ENCODE measurements at regions of chr7 and their contacts with region 1.

Region 1: DNA sequence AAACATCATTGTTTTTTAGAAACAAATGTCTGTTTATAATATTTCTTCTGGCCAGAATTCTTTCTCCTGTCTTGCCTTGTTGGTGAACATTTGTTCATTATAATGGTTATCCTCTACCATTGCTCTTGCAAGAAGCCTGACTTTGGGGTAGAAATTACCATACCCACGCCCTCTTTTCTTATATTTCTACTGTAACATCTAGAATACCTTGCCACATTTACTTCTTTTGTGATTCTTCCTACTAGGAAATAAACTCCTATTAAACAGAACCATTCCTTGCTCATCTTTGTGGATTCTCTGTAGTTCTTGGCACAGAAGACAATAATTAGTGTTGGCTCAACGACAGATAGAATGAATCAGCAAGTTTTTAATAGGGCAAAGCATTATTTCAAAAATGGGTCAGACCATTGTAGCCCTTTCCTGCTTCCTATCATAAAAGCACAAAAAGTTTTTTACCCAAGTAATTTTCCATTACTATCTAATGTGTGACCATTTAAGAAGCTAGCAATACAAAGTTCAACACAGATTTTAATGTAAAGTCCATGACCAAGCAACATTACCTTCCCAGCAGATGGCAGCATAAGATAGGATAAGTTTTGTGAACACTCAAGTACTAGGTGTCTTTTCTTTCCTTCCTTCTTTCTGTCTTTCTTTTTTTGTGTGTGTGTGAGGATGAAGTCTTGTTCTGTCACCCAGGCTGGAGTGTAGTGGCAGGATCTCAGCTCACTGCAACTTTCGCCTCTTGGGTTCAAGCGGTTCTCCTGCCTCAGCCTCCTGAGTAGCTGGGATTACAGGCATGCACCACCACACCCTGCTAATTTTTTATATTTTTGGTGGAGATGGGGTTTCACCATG is 270.4 kb downstream of the HGF start:
- DNase-seq: peak; percentile 75
- H3K4me3 ChIP-seq: no peak overlapping the region
- CTCF ChIP-seq: peak; percentile 43

Region 2: DNA sequence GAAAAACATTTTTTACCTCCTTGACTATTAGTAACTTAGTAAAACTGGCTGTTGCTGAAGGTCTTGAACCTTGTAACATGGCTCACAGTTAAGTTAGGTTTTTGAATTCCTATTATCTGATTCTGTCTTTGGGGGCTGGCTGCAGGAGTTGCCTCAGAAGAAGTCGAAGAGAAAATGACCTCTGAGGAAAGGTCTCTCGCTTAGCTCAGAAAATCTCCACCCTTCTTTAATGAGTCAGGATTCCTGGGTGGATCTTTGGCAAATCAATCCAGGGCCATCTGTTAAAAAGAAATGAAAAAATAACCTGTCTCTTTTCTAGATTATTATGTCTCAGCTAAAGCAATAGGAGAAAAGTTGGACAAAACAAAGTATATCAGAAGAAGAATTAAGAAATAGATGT is 312.8 kb before region 1 on chr7:
- in situ Hi-C with region 1: no loop called
- DNase-seq: no peak
- H3K4me3 ChIP-seq: no peak overlapping the region
- CTCF ChIP-seq: no peak

Region 3: DNA sequence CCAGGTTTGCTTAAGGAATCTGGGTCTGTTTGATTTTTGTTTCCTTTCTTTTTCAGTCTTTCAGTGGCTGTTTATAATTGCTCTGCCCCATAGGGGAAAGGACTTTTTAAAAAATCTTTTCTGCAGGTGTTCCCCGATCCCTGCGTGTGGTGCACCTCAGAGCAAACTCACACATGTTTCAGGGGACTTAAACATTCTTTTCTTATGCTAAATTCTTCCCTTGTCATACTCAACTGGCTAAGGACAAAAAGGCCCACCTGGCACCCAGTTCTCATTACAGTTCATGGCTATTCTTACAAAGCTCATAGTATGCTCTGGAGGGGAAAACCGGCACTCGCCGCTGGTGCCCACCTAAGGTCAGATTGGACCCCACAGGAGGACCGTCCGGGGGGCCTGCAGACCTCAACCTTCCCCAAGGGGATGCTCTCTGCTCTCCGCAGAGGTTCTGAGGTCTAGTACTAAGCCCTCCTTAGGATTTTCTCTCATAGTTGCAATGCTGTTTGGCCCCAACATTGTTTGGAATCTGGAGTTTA is 50.1 kb after region 1 on chr7:
- in situ Hi-C with region 1: no loop called
- DNase-seq: no peak
- H3K4me3 ChIP-seq: no peak overlapping the region
- CTCF ChIP-seq: no peak

Region 4: GRCh38 chr7:81583882-81584533 is 84.5 kb after region 1 on chr7:
- in situ Hi-C with region 1: no loop called
- DNase-seq: no peak
- H3K4me3 ChIP-seq: no peak overlapping the region
- CTCF ChIP-seq: no peak

Region 5: DNA sequence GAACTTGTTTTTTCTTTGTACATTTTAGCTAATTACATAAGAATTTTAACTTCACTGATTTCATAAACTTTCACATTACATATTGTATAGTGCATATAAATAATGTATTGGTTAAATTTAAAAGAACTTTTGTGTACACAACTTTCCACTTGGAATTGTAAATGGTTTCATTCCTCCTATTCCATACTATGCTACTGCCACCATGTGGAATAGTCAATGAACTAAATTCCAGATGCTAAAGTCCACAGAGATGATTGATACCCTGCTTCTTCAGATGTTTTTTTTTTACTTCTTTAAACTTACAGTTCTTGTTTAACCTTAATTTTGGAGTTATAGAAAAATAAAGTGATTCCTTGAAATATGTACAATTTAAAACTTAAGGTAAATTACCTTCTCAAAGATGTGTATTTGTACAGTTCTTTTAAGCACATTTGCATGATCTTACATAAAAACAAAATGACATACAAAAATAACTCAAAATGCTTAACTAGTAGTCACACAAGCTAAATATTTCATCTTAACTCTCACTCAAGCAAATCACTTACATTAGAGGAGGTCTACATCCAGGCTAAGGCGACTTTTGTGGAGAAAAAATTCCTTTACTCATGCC is 518.0 kb after region 1 on chr7:
- in situ Hi-C with region 1: loop called (anchors 25 kb)
- DNase-seq: no peak
- H3K4me3 ChIP-seq: no peak overlapping the region
- CTCF ChIP-seq: peak; percentile 44

Region 6: GRCh38 chr7:82605247-82605872 is 1105.9 kb after region 1 on chr7:
- in situ Hi-C with region 1: loop called (anchors 25 kb)
- DNase-seq: peak; percentile 31
- H3K4me3 ChIP-seq: no peak overlapping the region
- CTCF ChIP-seq: peak; percentile 51

Measured in astrocyte of the cerebellum (primary cell).